GM12878 (cell line): ENCODE measurements at regions of chr6 and their contacts with region 1.

Region 1: GRCh38 chr6:43361269-43361668 is 8.2 kb downstream of the ZNF318 start:
- DNase-seq: no peak
- ATAC-seq: peak; percentile 68
- H3K4me3 ChIP-seq: peak overlapping the region; percentile 24; the same call in 1 of the 2 replicates
- H3K27ac ChIP-seq: no peak overlapping the region
- H3K4me1 ChIP-seq: peaks cover 10% of the 10 kb centered on the region
- H3K27me3 ChIP-seq: no peaks in the 10 kb centered on the region
- CTCF ChIP-seq: peak in 1 of 3 experiments; percentile 17; a peak in 1 of 6 replicates
- EP300 ChIP-seq: no peak
- POLR2A ChIP-seq: no peak
- RAD21 ChIP-seq: peak; percentile 28; the same call in 1 of the 2 replicates

Region 2: GRCh38 chr6:43263314-43264178 is 97.7 kb before region 1 on chr6:
- CTCF ChIA-PET with region 1: interaction called, 28 read pairs
- POLR2A ChIA-PET with region 1: interaction called, 7 read pairs
- RAD21 ChIA-PET with region 1: interaction called, 17 read pairs
- SMC1A ChIA-PET with region 1: interaction called, 14 read pairs
- in situ Hi-C with region 1: no loop called
- intact Hi-C with region 1: loop called (anchors 1 kb)
- DNase-seq: peak; percentile 46
- ATAC-seq: peak; percentile 99
- H3K4me3 ChIP-seq: no peak overlapping the region
- H3K27ac ChIP-seq: no peak overlapping the region
- H3K4me1 ChIP-seq: peaks cover 2% of the 10 kb centered on the region; the same call in 1 of the 2 replicates
- H3K27me3 ChIP-seq: no peaks in the 10 kb centered on the region; a peak in 1 of 4 replicates
- CTCF ChIP-seq: peak; percentile 94 to 97 (median 97)
- EP300 ChIP-seq: no peak
- POLR2A ChIP-seq: no peak
- RAD21 ChIP-seq: peak; percentile 93

Region 3: DNA sequence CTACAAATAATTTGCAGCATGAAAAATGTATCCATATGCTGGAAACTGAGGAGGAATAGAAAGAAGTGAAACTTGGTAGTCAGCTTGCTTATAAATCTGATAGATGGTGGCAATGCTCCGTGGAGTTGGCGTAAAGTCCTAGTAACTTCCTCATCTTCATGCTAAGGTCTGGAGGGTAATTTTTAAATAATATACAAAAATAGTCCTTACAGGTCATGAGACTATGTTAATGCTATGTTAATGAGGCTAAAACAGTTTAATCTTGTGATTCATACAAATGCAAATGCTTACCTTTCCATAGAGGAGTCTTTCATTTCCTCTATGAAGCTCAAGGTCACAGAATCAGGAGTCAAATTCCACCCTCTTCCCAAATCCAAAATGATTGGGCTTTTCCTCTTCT is 43.3 kb before region 1 on chr6:
- CTCF ChIA-PET with region 1: interaction called, 6 read pairs
- POLR2A ChIA-PET with region 1: interaction called, 3 read pairs
- RAD21 ChIA-PET with region 1: interaction called, 7 read pairs
- SMC1A ChIA-PET with region 1: interaction called, 11 read pairs
- in situ Hi-C with region 1: no loop called
- intact Hi-C with region 1: no loop called
- DNase-seq: no peak
- ATAC-seq: no peak
- H3K4me3 ChIP-seq: no peak overlapping the region
- H3K27ac ChIP-seq: no peak overlapping the region
- H3K4me1 ChIP-seq: peaks cover 26% of the 10 kb centered on the region
- H3K27me3 ChIP-seq: no peaks in the 10 kb centered on the region
- CTCF ChIP-seq: no peak
- EP300 ChIP-seq: no peak
- POLR2A ChIP-seq: no peak
- RAD21 ChIP-seq: no peak

Region 4: DNA sequence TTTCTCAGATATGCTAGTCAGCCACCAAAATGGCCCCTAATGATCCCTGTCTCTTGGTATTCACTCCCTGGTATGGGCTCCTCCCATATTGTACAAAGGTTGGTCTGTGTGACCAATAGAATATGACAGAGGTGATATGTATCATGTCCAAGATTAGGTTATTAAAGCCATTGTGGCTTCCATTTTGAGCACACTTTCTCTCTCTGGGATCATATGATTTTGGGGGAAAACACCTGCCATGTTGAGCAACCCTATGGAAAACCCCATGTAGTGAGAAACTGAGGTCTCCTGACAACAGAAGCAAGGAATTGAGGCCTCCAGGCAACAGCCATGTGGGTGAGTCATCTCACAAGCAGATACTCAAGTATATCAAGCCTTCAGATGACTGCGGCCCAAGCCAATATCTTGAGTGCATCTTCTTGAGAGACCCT is 15.3 kb after region 1 on chr6:
- CTCF ChIA-PET with region 1: interaction called, 16 read pairs
- POLR2A ChIA-PET with region 1: interaction called, 218 read pairs
- RAD21 ChIA-PET with region 1: interaction called, 311 read pairs
- SMC1A ChIA-PET with region 1: interaction called, 616 read pairs
- in situ Hi-C with region 1: no loop called
- intact Hi-C with region 1: no loop called
- DNase-seq: peak; percentile 88
- ATAC-seq: peak; percentile 78
- H3K4me3 ChIP-seq: no peak overlapping the region
- H3K27ac ChIP-seq: peak overlapping the region; percentile 81
- H3K4me1 ChIP-seq: peaks cover 69% of the 10 kb centered on the region
- H3K27me3 ChIP-seq: no peaks in the 10 kb centered on the region
- CTCF ChIP-seq: no peak
- EP300 ChIP-seq: peak; percentile 6 to 67; a peak in 2 of 4 replicates
- POLR2A ChIP-seq: no peak
- RAD21 ChIP-seq: no peak

Region 5: DNA sequence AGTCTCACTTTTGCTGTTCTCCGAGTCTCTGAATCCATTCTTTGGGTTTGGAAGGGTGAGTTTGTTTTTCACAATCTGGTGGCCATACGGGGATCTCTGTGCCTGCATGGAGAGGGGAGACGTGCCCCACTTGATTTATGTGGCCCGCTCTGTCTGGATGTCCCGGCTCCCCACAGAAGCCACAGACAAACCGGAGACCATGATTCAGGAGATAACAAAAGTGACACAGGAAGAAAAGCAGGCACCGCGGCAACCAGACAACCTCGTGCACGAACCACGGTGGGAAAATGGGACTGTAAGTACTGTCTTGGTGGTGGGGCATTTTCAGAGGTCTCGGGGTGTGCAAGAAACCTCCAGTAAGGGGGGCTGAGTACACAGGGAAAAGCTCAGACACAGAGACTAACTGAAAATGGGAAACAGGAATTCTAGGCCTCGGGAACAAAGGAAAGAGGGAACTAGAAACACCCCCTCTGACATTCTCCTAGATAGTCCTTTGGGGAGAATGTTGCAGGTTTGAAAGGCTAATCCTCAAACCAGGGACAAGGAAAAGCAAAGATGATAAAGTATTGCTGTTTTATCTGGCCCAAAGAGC is 30.3 kb after region 1 on chr6:
- CTCF ChIA-PET with region 1: interaction called, 118 read pairs
- POLR2A ChIA-PET with region 1: interaction called, 91 read pairs
- RAD21 ChIA-PET with region 1: interaction called, 22 read pairs
- SMC1A ChIA-PET with region 1: interaction called, 616 read pairs
- in situ Hi-C with region 1: no loop called
- intact Hi-C with region 1: loop called (anchors 2 kb)
- DNase-seq: no peak
- ATAC-seq: peak; percentile 5
- H3K4me3 ChIP-seq: peak overlapping the region; percentile 52
- H3K27ac ChIP-seq: peak overlapping the region; percentile 59
- H3K4me1 ChIP-seq: peaks cover 6% of the 10 kb centered on the region; the same call in 1 of the 2 replicates
- H3K27me3 ChIP-seq: no peaks in the 10 kb centered on the region
- CTCF ChIP-seq: no peak
- EP300 ChIP-seq: no peak
- POLR2A ChIP-seq: no peak
- RAD21 ChIP-seq: no peak

Region 6: DNA sequence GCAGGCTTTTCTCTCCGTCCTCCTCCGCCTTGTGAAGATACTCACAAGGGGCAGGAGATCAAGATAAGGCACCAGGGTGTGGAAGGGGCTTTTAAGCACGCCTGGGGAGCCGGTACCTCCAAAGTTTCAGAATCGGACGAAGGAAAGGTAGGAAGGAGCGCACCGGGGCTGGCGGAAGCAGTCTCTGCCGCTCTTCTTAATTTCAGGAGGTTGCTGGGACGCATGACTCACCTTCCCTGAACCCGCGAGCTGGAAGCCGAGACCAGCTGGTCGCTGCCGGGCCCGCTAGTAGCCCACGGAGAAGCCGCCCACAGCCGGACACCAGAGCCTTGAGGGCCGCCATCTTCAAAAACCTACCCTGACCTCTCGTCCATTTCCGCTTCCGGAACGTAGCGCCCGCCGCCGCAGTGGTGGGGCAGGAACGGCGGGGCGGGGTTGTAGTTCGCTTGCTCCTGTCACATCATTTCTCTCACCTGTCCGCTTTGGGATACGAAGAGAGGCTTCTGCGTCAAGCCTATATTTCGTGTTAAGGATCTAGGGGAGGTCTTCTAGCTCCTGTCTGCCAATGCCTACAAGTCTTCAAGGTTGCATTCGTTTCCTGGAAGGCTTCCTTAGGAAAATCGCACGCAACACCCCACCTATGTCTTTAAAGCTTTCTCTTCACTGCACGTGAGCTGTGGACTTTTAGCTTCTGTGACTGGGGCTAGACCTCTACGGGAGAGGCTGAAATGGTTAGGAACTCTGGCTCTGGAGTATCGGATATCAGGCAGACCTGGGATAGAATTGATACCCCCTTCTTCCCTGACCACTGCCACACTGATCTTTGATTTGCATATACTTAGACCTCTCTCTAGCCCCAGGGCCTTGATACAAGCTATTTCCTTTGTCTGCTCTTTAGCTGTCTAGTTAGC is 326.4 kb after region 1 on chr6 and contains the start of gene MRPS18A:
- CTCF ChIA-PET with region 1: no interaction called
- POLR2A ChIA-PET with region 1: no interaction called
- RAD21 ChIA-PET with region 1: no interaction called
- SMC1A ChIA-PET with region 1: no interaction called
- in situ Hi-C with region 1: no loop called
- intact Hi-C with region 1: no loop called
- DNase-seq: no peak
- ATAC-seq: peak; percentile 98
- H3K4me3 ChIP-seq: peak within 1 kb of the TSS; percentile 98
- H3K27ac ChIP-seq: peak within 1 kb of the TSS; percentile 86
- H3K4me1 ChIP-seq: peaks cover 18% of the 10 kb centered on the region
- H3K27me3 ChIP-seq: no peaks in the 10 kb centered on the region
- CTCF ChIP-seq: no peak
- EP300 ChIP-seq: no peak
- POLR2A ChIP-seq: peak; percentile 89
- RAD21 ChIP-seq: no peak
- polyA plus RNA-seq, gene MRPS18A: 105 to 158 TPM